Activated CD4-positive, alpha-beta T cell treated with anti-CD3 and anti-CD28 coated beads for 36 hours (primary cell): ENCODE measurements at regions of chr15 and their contacts with region 1.

Region 1: GRCh38 chr15:40405501-40406381 is at the start of gene IVD:
- DNase-seq: peak; percentile 95
- ATAC-seq: peak; percentile 97
- H3K4me3 Mint-ChIP-seq: peak within 1 kb of the TSS; percentile 78
- H3K27ac Mint-ChIP-seq: peak within 1 kb of the TSS; percentile 95
- H3K4me1 Mint-ChIP-seq: peaks cover 52% of the 10 kb centered on the region
- H3K27me3 Mint-ChIP-seq: no peaks in the 10 kb centered on the region
- total RNA-seq, gene IVD: 30.8 to 46.2 TPM

Region 2: GRCh38 chr15:40344631-40345120 is 61.1 kb before region 1 on chr15:
- CTCF ChIA-PET with region 1: interaction called, 10 read pairs
- POLR2A ChIA-PET with region 1: no interaction called
- intact Hi-C with region 1: no loop called
- DNase-seq: peak; percentile 85
- ATAC-seq: peak; percentile 93
- H3K4me3 Mint-ChIP-seq: no peak overlapping the region
- H3K27ac Mint-ChIP-seq: no peak overlapping the region
- H3K4me1 Mint-ChIP-seq: no peaks in the 10 kb centered on the region
- H3K27me3 Mint-ChIP-seq: no peaks in the 10 kb centered on the region

Region 3: DNA sequence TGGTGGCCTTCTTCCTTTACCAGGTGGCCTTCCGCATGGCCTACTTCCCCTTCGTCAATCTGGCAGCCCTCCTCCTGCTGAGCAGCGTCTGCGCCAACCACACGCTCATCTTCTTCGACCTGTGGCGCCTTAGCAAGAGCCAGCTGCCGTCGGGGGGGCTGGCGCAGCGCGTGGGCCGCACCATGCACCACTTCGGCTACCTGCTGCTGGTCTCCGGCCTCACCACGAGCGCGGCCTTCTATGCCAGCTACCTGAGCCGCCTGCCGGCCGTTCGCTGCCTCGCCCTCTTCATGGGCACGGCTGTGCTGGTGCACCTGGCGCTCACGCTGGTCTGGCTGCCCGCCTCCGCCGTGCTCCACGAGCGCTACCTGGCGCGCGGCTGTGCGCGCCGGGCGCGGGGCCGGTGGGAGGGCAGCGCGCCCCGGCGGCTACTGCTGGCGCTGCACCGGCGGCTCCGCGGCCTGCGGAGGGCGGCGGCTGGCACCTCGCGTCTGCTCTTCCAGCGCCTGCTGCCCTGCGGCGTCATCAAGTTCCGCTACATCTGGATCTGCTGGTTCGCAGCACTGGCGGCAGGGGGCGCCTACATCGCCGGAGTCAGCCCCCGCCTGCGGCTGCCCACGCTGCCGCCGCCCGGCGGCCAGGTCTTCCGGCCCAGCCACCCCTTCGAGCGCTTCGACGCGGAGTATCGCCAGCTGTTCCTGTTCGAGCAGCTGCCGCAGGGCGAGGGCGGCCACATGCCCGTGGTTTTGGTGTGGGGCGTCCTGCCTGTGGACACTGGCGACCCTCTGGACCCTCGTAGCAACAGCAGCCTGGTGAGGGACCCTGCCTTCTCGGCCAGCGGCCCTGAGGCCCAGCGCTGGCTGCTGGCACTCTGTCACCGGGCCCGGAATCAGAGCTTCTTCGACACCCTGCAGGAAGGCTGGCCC is 37.8 kb before region 1 on chr15:
- CTCF ChIA-PET with region 1: interaction called, 4 read pairs
- POLR2A ChIA-PET with region 1: interaction called, 3 read pairs
- intact Hi-C with region 1: loop called (anchors 1 to 5 kb)
- DNase-seq: peak; percentile 94
- ATAC-seq: peak; percentile 98
- H3K4me3 Mint-ChIP-seq: peak overlapping the region; percentile 74
- H3K27ac Mint-ChIP-seq: peak overlapping the region; percentile 51
- H3K4me1 Mint-ChIP-seq: peaks cover 8% of the 10 kb centered on the region
- H3K27me3 Mint-ChIP-seq: no peaks in the 10 kb centered on the region

Region 4: GRCh38 chr15:40493089-40493840 is 87.5 kb after region 1 on chr15:
- CTCF ChIA-PET with region 1: no interaction called
- POLR2A ChIA-PET with region 1: no interaction called
- intact Hi-C with region 1: loop called in 1 of 2 experiments (anchors 1 kb)
- DNase-seq: peak; percentile 83
- ATAC-seq: peak; percentile 95
- H3K4me3 Mint-ChIP-seq: peak overlapping the region; percentile 13
- H3K27ac Mint-ChIP-seq: peak overlapping the region; percentile 86
- H3K4me1 Mint-ChIP-seq: peaks cover 35% of the 10 kb centered on the region
- H3K27me3 Mint-ChIP-seq: peaks cover 3% of the 10 kb centered on the region

Region 5: DNA sequence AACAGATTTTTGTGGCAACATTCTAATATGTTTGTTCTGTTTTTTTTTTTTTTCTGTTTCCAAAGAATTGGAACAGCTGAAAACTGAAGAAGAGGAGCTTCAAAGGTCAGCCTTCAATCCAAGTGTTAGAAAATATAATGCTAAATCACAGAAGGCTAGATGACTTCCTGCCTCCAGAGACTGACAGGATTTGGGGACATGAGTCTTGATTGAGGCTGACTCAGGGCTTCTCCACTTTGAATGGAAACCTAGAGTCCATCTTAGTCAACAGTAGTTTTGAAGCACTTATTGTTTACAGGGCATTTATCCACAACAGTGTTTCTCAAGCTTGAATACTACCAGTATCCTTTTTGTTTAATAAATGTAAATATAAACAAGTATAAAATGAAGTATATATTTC is 244.7 kb after region 1 on chr15:
- CTCF ChIA-PET with region 1: no interaction called
- POLR2A ChIA-PET with region 1: no interaction called
- intact Hi-C with region 1: no loop called
- DNase-seq: no peak
- ATAC-seq: no peak
- H3K4me3 Mint-ChIP-seq: no peak overlapping the region
- H3K27ac Mint-ChIP-seq: no peak overlapping the region
- H3K4me1 Mint-ChIP-seq: peaks cover 4% of the 10 kb centered on the region
- H3K27me3 Mint-ChIP-seq: no peaks in the 10 kb centered on the region